ENCODE measurements at regions of chr2 and their contacts with region 1.

Region 1: DNA sequence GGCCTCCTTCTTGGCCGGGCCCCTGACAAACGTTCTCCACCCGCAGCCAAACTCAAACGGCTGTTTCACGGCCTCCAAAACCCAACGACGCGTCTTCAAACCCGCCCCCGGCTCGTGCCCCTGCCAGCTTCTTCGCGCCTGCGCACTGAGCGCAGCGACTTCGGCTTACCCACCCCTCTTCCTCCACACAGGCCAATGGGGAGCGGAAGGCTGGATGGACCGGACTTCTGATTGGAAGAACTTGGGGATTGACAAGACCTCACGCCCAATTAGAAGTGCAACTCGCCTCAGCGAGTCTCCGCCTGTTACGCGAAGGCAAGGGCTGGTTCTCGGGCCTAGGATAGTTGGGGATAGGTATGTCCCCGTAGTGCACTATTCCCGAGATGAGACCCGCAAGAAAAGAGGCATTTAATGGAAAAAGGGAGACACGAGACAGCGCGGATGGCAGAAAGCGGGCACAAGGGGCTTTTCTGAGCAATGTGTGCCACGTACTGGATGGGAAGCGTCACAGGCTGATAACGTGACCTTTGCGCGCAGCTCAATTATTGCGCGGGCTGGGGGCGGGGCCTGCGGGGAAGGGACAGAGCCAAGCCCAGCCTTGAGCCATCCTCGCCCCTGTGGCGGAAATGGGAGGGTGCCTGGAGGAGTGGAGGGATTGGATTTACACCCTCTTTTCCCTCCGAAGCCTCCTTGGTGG is at the start of gene LAPTM4A:
- DNase-seq: peak; percentile 97
- H3K4me3 Mint-ChIP-seq: no peak within 1 kb of the TSS
- H3K27ac Mint-ChIP-seq: no peak within 1 kb of the TSS
- H3K4me1 Mint-ChIP-seq: peaks cover 26% of the 10 kb centered on the region
- H3K27me3 Mint-ChIP-seq: peaks cover 14% of the 10 kb centered on the region
- total RNA-seq, gene LAPTM4A: 25.5 and 29.1 TPM in 2 replicates

Region 2: GRCh38 chr2:18560031-18560796 is 1491.5 kb before region 1 on chr2 and contains the start of gene RDH14:
- intact Hi-C with region 1: loop called (anchors 1 kb)
- DNase-seq: peak; percentile 87
- H3K4me3 Mint-ChIP-seq: peak within 1 kb of the TSS; percentile 91
- H3K27ac Mint-ChIP-seq: peak within 1 kb of the TSS; percentile 91
- H3K4me1 Mint-ChIP-seq: peaks cover 38% of the 10 kb centered on the region
- H3K27me3 Mint-ChIP-seq: no peaks in the 10 kb centered on the region
- total RNA-seq, gene RDH14: 12.4 and 14.5 TPM in 2 replicates

Region 3: DNA sequence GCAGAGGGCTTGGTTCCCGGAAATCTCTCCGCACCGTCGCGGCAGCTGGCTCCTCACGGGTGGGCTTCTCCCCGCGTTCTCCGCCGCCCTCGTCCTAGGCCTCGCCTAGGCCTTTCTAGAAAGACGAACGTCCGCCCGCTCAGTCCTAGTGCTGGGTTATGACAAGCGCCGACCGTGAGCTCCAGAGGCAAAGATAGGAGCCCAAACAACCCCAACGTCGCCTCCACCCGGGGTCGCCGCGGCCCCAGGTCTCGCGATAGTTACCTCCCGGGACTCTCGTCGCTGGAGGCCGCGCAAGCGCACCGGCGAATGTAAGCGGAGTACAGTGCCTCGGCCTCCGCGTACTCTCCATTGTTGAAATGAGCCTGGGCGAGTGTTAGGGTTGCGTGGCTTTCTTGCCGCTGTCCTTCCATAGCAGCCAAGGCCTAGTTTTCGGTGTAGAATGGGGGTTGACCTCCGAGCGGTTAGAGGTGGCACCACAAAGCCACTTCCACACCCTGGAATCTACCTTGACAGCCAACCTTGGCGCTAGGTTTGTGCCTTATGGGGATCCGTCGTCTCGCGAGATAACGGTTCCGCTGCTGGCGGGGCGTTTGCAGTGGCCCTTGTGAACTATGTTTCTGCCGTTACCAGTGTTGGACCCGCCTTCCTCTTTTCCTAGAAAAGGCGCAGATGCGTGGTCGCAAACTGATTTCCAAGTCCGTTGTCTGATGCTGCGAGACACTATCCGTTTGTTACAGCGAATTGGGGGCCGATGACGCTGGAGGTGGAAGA is 150.1 kb before region 1 on chr2 and contains the start of gene TTC32:
- intact Hi-C with region 1: loop called (anchors 1 kb)
- DNase-seq: peak; percentile 89
- H3K4me3 Mint-ChIP-seq: peak within 1 kb of the TSS; percentile 91
- H3K27ac Mint-ChIP-seq: peak within 1 kb of the TSS; percentile 94
- H3K4me1 Mint-ChIP-seq: peaks cover 48% of the 10 kb centered on the region
- H3K27me3 Mint-ChIP-seq: peaks cover 9% of the 10 kb centered on the region
- total RNA-seq, gene TTC32: 14.0 and 15.7 TPM in 2 replicates

Region 4: GRCh38 chr2:20015472-20016083 is 36.1 kb before region 1 on chr2:
- intact Hi-C with region 1: loop called (anchors 1 kb)
- DNase-seq: no peak
- H3K4me3 Mint-ChIP-seq: no peak overlapping the region
- H3K27ac Mint-ChIP-seq: no peak overlapping the region
- H3K4me1 Mint-ChIP-seq: no peaks in the 10 kb centered on the region
- H3K27me3 Mint-ChIP-seq: peaks cover 47% of the 10 kb centered on the region

Region 5: GRCh38 chr2:20065885-20066602 is 14.4 kb after region 1 on chr2:
- intact Hi-C with region 1: no loop called
- DNase-seq: no peak
- H3K4me3 Mint-ChIP-seq: no peak overlapping the region
- H3K27ac Mint-ChIP-seq: no peak overlapping the region
- H3K4me1 Mint-ChIP-seq: no peaks in the 10 kb centered on the region
- H3K27me3 Mint-ChIP-seq: peaks cover 6% of the 10 kb centered on the region

Region 6: DNA sequence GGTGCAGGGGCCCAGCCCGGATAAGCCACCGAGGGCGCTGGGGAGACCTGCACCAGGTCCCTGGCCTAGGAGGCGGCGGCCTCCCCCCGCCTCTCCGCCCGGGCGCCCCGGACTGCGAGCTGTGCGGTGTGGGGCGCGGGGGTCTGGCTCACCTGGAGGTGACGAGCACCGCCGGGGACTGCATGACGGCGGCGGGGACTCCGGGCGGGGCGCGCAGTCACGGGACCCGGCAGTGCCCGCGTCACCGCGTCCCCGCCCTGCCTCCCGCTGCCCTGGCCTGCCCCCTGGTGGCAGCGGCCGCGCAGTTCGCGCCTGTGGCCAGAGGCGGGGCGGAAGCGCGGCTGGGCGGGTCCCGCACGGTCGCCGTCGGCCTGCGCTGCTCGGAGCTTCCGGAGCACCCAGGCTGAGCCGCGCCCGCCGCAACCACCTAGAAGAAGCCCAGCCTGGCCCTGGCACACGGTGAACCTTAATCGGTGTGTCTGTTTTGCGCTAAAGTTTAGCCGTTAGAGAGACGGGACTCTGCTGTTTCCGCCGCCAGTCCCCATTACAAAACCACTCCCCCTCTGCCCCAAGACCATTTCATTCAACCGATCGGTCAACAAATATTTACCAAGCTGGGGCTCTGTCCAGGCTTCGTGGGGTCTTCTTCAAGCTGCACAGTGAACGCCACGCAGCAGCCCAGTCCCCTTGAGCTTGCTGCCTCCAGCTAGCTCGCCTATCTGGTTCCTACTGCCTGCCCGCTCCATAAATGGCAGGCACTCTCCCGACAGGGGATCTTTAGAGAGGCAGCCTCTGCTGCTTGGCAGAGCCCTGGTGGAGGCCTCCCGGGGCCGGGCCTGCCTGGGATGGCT is 599.4 kb after region 1 on chr2 and contains the start of gene HS1BP3:
- intact Hi-C with region 1: loop called (anchors 5 kb)
- DNase-seq: peak; percentile 91
- H3K4me3 Mint-ChIP-seq: peak within 1 kb of the TSS; percentile 88
- H3K27ac Mint-ChIP-seq: peak within 1 kb of the TSS; percentile 92
- H3K4me1 Mint-ChIP-seq: peaks cover 22% of the 10 kb centered on the region
- H3K27me3 Mint-ChIP-seq: peaks cover 6% of the 10 kb centered on the region
- total RNA-seq, gene HS1BP3: 9.1 and 10.2 TPM in 2 replicates

Measured in activated T-helper 1 cell treated with anti-CD3 and anti-CD28 coated beads, Interleukin-12 subunit alpha, Interleukin-12 subunit beta, Interleukin-2, Interleukin-4 antibody, amounts not matched to agents 30 ng/mL and 10 ng/mL and 1 ng/mL, durations not matched to agents 14 hours and 24 hours and 36 hours (primary cell).